ENCODE measurements at regions of chr9 and their contacts with region 1.

Region 1: DNA sequence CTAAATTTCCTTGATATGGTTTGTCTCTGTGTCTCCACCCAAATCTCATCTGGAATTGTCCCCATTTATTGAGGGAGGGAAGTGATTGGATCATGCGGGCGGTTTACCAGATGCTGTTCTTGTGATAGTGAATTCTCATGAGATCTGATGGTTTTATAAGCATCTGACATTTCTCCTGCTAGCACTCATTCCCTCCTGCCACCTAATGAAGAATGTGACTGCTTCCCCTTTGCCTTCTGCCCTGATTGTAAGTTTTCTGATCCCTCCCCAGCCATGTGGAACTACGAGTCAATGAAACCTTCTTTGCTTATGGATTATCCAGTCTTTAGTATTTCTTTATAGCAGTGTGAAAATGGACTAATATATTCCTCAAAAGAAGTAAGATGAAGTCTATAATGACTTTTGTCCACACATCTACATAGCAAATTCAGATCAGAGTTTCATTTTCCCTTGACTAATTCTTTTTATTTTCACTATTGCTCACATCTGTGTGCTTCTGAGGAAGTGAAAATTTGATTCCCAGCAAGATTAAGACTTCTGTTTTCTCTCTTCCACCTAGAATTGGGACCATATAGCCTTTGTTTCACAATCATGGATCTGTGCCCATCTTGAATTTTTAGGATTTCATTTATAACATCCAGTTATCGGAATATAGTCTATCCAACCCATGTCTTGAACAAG is 393.5 kb downstream of the DMAC1 start:
- DNase-seq: no peak
- ATAC-seq: no peak
- H3K4me3 ChIP-seq: no peak overlapping the region
- H3K27ac ChIP-seq: no peak overlapping the region
- H3K4me1 ChIP-seq: no peaks in the 10 kb centered on the region
- H3K27me3 ChIP-seq: no peaks in the 10 kb centered on the region
- CTCF ChIP-seq: no peak
- EP300 ChIP-seq: no peak
- POLR2A ChIP-seq: no peak
- RAD21 ChIP-seq: no peak

Region 2: DNA sequence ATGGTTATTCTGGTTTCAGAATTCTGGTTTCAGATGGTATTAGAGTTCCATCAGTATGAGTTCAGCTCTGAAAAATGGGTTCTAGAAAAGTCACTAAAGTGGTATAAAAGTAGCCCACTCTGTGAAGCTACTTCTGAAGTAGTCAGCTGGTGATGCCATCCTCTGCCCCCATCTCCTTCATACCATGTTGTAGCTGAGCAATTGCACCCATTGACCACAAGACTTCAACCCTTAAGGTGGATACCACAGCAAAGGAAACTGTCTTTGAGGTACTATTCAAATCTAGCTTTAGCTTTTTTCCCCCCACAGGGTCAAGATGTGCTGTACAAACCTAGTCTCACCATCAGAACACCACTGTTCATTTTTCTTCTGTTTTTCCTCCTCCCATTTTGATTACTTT is 51.4 kb before region 1 on chr9:
- CTCF ChIA-PET with region 1: no interaction called
- POLR2A ChIA-PET with region 1: no interaction called
- in situ Hi-C with region 1: no loop called
- intact Hi-C with region 1: no loop called
- DNase-seq: no peak
- ATAC-seq: no peak
- H3K4me3 ChIP-seq: no peak overlapping the region
- H3K27ac ChIP-seq: no peak overlapping the region
- H3K4me1 ChIP-seq: no peaks in the 10 kb centered on the region
- H3K27me3 ChIP-seq: no peaks in the 10 kb centered on the region; a peak in 1 of 5 replicates
- CTCF ChIP-seq: no peak
- EP300 ChIP-seq: no peak
- POLR2A ChIP-seq: no peak
- RAD21 ChIP-seq: no peak

Region 3: DNA sequence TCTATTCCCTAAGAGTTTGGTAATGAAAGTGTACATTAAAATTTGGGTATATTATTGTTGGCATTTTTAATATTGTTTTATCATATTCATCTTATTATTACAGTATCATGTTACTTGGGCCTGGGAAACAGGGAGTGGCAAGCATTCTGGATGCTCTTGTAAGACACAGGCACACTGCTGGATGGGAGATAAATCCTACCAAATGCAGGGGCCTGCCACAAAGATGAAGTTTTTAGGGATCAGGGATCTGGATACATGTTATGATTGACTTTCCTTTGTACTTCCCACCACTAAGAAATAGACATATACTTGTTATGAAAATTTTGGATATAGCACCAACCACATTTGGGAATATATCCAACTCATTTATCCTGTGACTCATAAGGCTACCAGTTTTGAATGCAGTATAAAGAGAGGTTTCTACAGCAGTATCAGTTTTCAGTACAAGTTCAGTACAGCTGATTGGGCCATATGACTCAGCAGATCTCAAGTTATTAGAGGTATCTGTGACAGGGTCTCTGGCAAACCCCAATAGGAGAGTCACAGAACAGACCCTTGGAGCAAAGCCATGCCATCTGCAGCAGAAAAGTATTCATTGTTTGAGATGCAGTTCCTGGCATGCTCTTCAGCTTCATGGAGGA is 33.4 kb after region 1 on chr9:
- CTCF ChIA-PET with region 1: no interaction called
- POLR2A ChIA-PET with region 1: no interaction called
- in situ Hi-C with region 1: no loop called
- intact Hi-C with region 1: loop called (anchors 2 kb)
- DNase-seq: no peak
- ATAC-seq: no peak
- H3K4me3 ChIP-seq: no peak overlapping the region
- H3K27ac ChIP-seq: no peak overlapping the region
- H3K4me1 ChIP-seq: no peaks in the 10 kb centered on the region
- H3K27me3 ChIP-seq: no peaks in the 10 kb centered on the region
- CTCF ChIP-seq: no peak
- EP300 ChIP-seq: no peak
- POLR2A ChIP-seq: no peak
- RAD21 ChIP-seq: no peak

Measured in HepG2 (cell line).